ENCODE measurements at regions of chr20 and their contacts with region 1.

Region 1: DNA sequence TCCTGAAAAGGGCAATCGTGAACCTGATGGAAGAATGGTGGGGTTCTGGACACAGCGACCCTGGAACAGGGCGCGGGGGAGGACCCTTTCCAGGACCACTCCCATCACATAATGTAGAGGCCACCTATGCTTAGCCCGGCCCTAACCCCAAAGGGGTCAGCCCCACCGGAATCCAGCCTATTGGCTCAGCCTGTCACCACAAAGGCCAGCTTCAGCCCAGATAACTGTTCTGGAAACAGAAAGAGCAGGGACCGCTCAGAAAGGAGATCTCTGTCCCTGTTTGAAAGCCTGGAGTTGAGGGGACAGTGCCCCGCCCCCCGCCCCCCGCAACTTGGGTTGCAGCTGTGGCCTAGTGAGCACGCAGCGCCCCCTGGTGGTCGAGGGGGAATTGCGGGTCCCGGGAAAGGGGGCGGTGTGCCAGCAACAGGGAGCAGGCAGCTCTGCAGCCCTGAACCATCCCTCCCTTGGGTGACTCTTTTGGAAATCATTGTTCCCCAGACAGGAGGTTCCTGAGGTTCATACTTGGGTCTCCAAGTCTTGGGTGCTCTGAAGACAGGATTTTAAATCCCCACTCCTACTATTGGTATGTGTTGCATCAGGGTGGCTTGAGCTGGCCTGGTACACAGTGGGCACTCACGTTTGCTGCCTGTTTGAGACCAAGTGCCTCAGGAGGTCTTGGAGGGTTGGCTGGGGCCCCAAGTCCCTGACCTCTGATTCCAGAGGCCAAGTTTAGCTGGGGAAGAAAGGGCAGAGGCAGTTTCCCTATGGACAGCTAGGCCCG is 1.5 kb downstream of the SIGLEC1 start:
- DNase-seq: peak; percentile 76 to 84
- ATAC-seq: peak; percentile 32 to 76 (median 56)
- H3K4me3 ChIP-seq: peak overlapping the region in 6 of 10 donors; percentile 5 to 49 (median 22)
- H3K27ac ChIP-seq: peak overlapping the region in 6 of 10 donors; percentile 12 to 75 (median 44)
- H3K4me1 ChIP-seq: peaks cover 3 to 56% (median 14%) of the 10 kb centered on the region in 9 donors
- H3K27me3 ChIP-seq: no peaks in the 10 kb centered on the region
- CTCF ChIP-seq: peak; percentile 90 to 99 (median 97)

Region 2: GRCh38 chr20:3515379-3516170 is 195.3 kb before region 1 on chr20:
- intact Hi-C with region 1: no loop called
- DNase-seq: no peak
- ATAC-seq: no peak
- H3K4me3 ChIP-seq: no peak overlapping the region
- H3K27ac ChIP-seq: no peak overlapping the region
- H3K4me1 ChIP-seq: peaks cover 0 to under 1% (median 0%) of the 10 kb centered on the region in 9 donors
- H3K27me3 ChIP-seq: no peaks in the 10 kb centered on the region
- CTCF ChIP-seq: no peak

Region 3: DNA sequence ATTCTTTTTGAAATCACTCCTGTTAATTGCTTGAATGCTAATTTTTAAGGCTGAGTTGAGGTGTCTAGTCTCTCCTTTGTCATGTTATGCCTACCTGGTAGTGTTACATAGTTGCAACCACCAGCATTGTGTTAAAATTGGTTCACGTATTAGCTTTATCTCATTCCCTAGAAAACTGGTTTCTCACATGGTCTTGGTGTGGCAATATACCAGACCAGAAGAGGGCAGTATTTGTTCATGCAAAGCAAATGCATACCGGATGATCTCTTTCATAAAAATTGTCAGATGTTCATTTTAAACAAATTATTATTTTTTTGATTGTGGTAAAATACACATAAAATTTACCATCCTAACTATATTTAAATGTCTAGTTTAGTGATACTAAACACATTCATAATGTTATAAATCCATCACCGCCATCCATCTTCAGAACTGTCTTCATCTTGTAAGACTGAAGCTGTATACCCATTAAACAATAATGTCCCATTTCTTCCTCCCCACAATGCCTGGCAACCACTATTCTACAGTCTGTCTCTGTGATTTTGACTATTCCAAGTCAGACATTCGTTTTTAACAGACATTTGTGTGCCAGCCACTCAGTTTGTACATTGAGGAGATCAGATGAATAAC is 147.2 kb before region 1 on chr20:
- intact Hi-C with region 1: loop called in 3 of 10 experiments (anchors 5 to 10 kb)
- DNase-seq: no peak
- ATAC-seq: peak in 1 of 8 donors; percentile 37
- H3K4me3 ChIP-seq: no peak overlapping the region
- H3K27ac ChIP-seq: no peak overlapping the region
- H3K4me1 ChIP-seq: peaks cover 0 to 23% (median 0%) of the 10 kb centered on the region in 9 donors
- H3K27me3 ChIP-seq: no peaks in the 10 kb centered on the region
- CTCF ChIP-seq: peak; percentile 30 to 80 (median 67)

Region 4: GRCh38 chr20:3577366-3577765 is 133.5 kb before region 1 on chr20:
- intact Hi-C with region 1: no loop called
- DNase-seq: no peak
- ATAC-seq: no peak
- H3K4me3 ChIP-seq: no peak overlapping the region
- H3K27ac ChIP-seq: no peak overlapping the region
- H3K4me1 ChIP-seq: no peaks in the 10 kb centered on the region
- H3K27me3 ChIP-seq: no peaks in the 10 kb centered on the region
- CTCF ChIP-seq: no peak

Region 5: DNA sequence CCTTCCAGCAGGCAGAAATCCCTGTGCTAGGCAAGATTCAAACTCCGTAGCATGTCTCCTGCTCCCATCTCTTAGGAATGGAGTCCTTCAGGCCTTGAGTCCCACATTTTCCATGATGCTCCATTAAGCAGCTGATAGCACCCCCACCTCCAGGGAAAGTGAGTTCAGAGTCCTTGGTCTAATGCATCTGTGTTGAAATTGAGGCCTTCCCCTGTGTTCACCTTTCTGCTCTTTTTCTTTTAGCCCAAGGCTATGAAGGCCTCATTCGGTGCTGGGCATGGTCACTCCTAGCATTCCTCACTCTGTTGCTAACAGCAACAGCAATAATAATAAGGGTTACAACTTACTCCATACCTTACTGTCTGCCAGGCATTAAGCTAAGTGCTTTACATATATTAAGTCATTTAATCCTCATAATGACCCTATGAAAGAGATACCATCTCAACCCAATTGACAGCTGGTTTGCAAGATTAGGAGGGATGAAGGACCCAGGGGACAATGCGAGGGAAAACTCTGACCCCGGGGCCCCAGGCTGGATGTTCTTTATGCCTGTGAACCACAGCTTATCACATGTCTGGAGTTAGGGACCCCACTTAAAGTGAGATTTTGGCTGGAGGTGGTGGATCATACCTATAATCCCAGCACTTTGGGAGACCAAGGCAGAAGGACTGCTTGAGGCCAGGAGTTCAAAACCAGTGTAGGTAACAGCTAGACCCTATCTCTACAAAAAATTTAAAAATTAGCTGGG is 160.8 kb after region 1 on chr20:
- intact Hi-C with region 1: no loop called
- DNase-seq: no peak
- ATAC-seq: no peak
- H3K4me3 ChIP-seq: no peak overlapping the region
- H3K27ac ChIP-seq: no peak overlapping the region
- H3K4me1 ChIP-seq: peaks cover 0 to 36% (median 0%) of the 10 kb centered on the region in 9 donors
- H3K27me3 ChIP-seq: no peaks in the 10 kb centered on the region
- CTCF ChIP-seq: no peak

Region 6: DNA sequence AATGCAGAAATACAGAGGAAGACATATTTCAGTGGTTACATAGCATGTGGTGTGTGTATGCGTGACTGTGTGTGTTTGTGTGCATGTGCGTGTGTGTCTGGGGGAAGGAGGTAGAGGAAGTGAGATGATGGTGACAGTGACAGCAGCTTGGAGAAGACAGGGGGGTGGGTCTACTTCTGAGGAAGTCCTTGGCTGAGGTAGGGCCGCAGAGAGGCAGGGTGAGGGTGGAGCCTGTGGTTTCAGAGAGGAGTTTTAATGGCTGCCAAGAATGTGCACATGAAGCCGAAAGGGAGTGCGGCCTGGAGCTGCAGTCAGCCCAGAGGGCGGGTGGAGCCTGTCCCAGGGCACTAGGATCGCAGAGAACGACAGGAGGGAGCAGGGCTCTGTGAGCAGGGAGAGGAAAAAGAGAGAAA is 327.2 kb after region 1 on chr20:
- intact Hi-C with region 1: no loop called
- DNase-seq: peak; percentile 61 to 72
- ATAC-seq: peak; percentile 69 to 88 (median 87)
- H3K4me3 ChIP-seq: no peak overlapping the region
- H3K27ac ChIP-seq: peak overlapping the region in 4 of 10 donors; percentile 3 to 82 (median 24)
- H3K4me1 ChIP-seq: peaks cover 0 to 28% (median 7%) of the 10 kb centered on the region in 9 donors
- H3K27me3 ChIP-seq: peaks cover 0 to 3% (median 0%) of the 10 kb centered on the region in 7 donors
- CTCF ChIP-seq: no peak

Measured in heart right ventricle (tissue), 16 donors.